Endothelial cell of umbilical vein (primary cell): ENCODE measurements at regions of chrX and their contacts with region 1.

Region 1: GRCh38 chrX:49915361-49916222 is 6.8 kb upstream of the CLCN5 start:
- DNase-seq: peak; percentile 49
- H3K4me3 ChIP-seq: no peak overlapping the region
- H3K27ac ChIP-seq: no peak overlapping the region
- H3K4me1 ChIP-seq: no peaks in the 10 kb centered on the region
- H3K27me3 ChIP-seq: no peaks in the 10 kb centered on the region
- CTCF ChIP-seq: peak; percentile 62 to 68
- POLR2A ChIP-seq: no peak

Region 2: DNA sequence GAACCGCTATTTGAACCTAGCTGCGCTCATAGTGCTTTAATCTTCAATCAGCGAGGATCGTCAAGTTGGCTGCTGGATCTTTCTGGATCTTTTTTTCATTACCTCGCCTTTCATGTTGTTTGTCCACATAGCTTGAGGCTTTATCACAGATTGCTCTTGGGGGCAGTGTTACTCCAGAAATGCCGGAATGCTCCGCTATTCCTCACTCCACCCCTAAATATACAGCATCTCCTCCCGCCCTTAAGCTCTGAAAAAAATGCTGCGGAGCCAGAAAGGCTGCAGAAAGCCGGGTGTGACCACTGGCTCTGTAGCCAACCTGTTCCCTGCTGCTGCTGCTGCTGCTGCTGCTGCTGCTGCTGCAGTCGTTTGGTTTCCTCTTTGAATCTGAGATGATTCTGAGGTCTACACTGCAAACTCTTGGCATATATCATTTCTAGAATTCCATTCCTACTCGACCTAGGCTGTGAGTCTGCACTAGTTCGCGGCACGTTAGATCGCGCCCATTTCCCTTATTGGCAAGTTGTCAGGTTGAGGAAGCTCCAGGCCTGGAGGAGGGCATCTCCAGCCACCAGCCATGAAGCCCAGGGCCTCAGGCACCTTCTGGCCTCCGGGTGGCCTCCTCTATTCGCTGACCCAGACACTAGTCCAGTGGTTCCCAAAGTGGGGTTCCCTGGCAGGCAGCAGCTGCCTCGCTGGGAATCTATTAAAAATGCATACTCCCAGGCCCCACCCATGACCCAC is 1284.1 kb before region 1 on chrX:
- CTCF ChIA-PET with region 1: no interaction called
- POLR2A ChIA-PET with region 1: no interaction called
- dilution Hi-C with region 1: no loop called
- intact Hi-C with region 1: loop called (anchors 2 kb)
- DNase-seq: peak; percentile 88
- H3K4me3 ChIP-seq: no peak overlapping the region
- H3K27ac ChIP-seq: no peak overlapping the region
- H3K4me1 ChIP-seq: no peaks in the 10 kb centered on the region
- H3K27me3 ChIP-seq: no peaks in the 10 kb centered on the region
- CTCF ChIP-seq: peak; percentile 42 to 51
- POLR2A ChIP-seq: no peak

Region 3: GRCh38 chrX:49829016-49829415 is 86.6 kb before region 1 on chrX and contains the start of gene PAGE4:
- CTCF ChIA-PET with region 1: no interaction called
- POLR2A ChIA-PET with region 1: no interaction called
- dilution Hi-C with region 1: no loop called
- intact Hi-C with region 1: no loop called
- DNase-seq: no peak
- H3K4me3 ChIP-seq: no peak within 1 kb of the TSS
- H3K27ac ChIP-seq: no peak within 1 kb of the TSS
- H3K4me1 ChIP-seq: no peaks in the 10 kb centered on the region
- H3K27me3 ChIP-seq: no peaks in the 10 kb centered on the region
- CTCF ChIP-seq: no peak
- POLR2A ChIP-seq: no peak
- total RNA-seq, gene PAGE4: not detected in 2 replicates

Region 4: DNA sequence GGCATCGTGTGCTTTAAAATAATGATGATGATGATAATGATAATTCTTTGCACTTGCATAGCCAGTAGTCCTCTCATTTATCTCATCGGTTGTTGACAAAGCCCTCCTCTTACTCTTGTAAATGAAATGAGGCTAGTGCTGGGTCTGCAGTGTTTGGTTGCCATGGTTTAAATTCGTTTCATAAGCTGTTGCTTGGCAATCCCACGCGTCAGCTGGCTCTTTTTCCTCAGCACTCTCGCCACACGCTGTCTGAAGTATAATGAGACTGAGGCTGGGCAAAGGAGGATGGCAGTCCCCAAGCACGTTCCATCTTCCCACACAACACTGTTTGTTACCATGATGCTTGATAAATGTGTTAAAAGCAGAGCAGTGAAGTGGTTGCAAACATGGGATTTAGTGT is 71.0 kb before region 1 on chrX:
- CTCF ChIA-PET with region 1: no interaction called
- POLR2A ChIA-PET with region 1: no interaction called
- dilution Hi-C with region 1: no loop called
- intact Hi-C with region 1: no loop called
- DNase-seq: no peak
- H3K4me3 ChIP-seq: no peak overlapping the region
- H3K27ac ChIP-seq: no peak overlapping the region
- H3K4me1 ChIP-seq: no peaks in the 10 kb centered on the region
- H3K27me3 ChIP-seq: no peaks in the 10 kb centered on the region
- CTCF ChIP-seq: no peak
- POLR2A ChIP-seq: no peak

Region 5: DNA sequence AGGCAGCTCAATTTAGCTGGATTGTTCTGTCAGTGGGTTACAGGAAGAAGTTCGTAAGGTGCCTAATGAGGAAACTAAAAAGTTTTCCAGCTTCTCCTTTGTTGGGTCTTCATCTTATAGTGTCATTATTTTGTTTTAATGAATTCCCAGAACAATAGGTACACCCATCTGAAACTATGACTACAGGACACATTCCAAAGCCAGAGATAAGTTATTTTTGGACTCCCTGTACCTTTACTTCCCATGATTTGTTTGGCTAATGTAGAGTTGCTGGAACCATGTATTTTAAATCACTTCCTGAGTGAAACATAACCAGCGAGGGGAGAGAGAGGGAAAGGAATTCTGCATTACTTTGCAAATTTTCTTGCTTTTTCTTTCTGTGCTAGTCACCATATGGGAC is 120.8 kb after region 1 on chrX:
- CTCF ChIA-PET with region 1: no interaction called
- POLR2A ChIA-PET with region 1: no interaction called
- dilution Hi-C with region 1: no loop called
- intact Hi-C with region 1: no loop called
- DNase-seq: peak; percentile 32
- H3K4me3 ChIP-seq: peak overlapping the region in 1 of 3 experiments; percentile 40
- H3K27ac ChIP-seq: peak overlapping the region; percentile 29
- H3K4me1 ChIP-seq: peaks cover 14% of the 10 kb centered on the region
- H3K27me3 ChIP-seq: no peaks in the 10 kb centered on the region
- CTCF ChIP-seq: no peak
- POLR2A ChIP-seq: no peak

Region 6: DNA sequence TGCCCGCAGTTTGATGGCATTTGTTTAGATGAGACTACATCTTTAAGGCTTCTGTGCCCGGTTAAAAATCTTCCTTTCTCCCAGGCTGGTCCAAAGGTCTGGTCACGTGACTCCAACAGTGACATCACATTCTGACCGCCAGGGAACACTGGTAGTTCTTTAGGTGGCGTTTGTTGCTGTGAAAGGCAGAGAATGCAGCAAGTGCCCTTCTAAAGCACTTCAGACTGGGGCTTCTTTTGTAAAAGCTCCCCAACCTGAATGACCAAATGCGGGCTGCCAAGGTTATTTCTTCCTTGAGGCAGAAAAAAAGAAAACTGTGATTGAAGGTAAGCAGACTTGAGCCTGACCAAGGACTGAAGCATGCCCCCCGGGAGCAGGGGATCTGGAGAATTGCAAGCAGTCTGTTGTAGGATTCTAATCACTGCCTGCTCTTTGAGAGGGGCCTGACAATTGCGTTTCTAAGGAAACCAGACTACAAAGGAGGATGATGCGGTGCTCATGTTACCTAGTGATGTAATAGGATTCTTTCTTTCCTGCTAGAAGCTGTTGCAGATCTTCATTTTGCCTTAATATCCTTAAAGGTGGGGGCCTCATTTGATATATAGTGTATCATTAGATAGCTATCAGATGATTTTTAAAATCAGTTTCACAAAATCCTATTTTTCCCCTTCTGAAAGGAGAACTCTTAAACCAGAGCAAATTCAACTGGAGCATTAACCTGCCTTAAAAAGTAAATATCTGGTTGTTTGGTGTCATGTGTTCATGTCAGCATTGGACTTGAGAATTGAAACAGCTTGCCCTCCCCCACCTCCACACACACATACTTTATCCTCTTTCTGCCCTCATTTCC is 152.1 kb after region 1 on chrX:
- CTCF ChIA-PET with region 1: no interaction called
- POLR2A ChIA-PET with region 1: no interaction called
- dilution Hi-C with region 1: no loop called
- intact Hi-C with region 1: no loop called
- DNase-seq: peak; percentile 1
- H3K4me3 ChIP-seq: no peak overlapping the region
- H3K27ac ChIP-seq: no peak overlapping the region
- H3K4me1 ChIP-seq: no peaks in the 10 kb centered on the region
- H3K27me3 ChIP-seq: no peaks in the 10 kb centered on the region
- CTCF ChIP-seq: no peak
- POLR2A ChIP-seq: no peak

Region 7: DNA sequence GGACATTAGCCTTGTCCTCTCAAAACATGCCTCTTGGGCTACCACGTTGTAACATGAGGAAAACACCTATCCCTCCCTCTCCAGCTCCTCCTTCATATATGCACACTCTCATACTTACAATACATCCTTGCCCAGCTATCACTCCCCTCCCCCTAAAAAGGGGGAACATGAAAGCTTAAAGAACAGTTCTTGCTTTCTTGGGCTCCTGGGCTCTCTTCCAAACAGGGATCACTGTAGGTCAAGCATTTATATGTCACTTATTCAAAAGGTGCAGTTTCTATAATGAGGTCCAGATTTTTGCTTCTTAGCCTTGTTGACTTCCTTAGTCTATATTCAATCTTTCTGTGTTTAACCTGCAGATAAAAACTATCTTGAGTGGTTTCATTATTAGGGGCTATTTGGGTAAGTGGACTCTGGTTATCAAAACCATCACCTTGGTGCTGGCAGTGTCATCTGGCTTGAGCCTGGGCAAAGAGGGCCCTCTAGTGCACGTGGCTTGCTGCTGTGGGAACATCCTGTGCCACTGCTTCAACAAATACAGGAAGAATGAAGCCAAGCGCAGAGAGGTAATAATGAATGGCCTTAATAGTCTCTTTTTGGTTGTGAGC is 165.8 kb after region 1 on chrX:
- CTCF ChIA-PET with region 1: interaction called, 12 read pairs
- POLR2A ChIA-PET with region 1: no interaction called
- dilution Hi-C with region 1: no loop called
- intact Hi-C with region 1: loop called (anchors 1 kb)
- DNase-seq: peak; percentile 34
- H3K4me3 ChIP-seq: no peak overlapping the region
- H3K27ac ChIP-seq: no peak overlapping the region
- H3K4me1 ChIP-seq: no peaks in the 10 kb centered on the region
- H3K27me3 ChIP-seq: no peaks in the 10 kb centered on the region
- CTCF ChIP-seq: peak; percentile 15 to 53
- POLR2A ChIP-seq: no peak

Region 8: GRCh38 chrX:50579955-50580354 is 664.4 kb after region 1 on chrX:
- CTCF ChIA-PET with region 1: interaction called, 3 read pairs
- POLR2A ChIA-PET with region 1: no interaction called
- dilution Hi-C with region 1: no loop called
- intact Hi-C with region 1: loop called (anchors 1 kb)
- DNase-seq: peak; percentile 49
- H3K4me3 ChIP-seq: no peak overlapping the region
- H3K27ac ChIP-seq: no peak overlapping the region
- H3K4me1 ChIP-seq: no peaks in the 10 kb centered on the region
- H3K27me3 ChIP-seq: no peaks in the 10 kb centered on the region
- CTCF ChIP-seq: peak; percentile 34 to 35
- POLR2A ChIP-seq: no peak

Region 9: DNA sequence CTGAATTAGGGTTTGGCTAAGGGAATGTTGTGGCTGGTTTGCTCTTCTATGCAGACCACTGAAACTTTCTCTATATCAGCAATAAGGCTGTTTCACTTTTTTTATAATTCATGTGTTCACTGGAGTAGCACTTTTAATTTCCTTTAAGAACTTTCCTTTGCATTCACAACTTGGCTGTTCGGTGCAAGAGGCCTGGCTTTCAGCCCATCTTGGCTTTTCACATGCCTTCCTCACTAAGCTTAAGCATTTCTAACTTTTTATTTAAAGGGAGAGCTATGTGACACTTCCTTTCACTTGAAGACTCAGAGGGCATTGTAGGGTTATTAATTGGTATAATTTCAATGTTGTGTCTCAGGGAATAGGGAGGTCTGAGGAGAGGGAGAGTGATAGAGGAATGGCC is 756.1 kb after region 1 on chrX:
- CTCF ChIA-PET with region 1: no interaction called
- POLR2A ChIA-PET with region 1: no interaction called
- dilution Hi-C with region 1: no loop called
- intact Hi-C with region 1: loop called (anchors 10 kb)
- DNase-seq: no peak
- H3K4me3 ChIP-seq: no peak overlapping the region
- H3K27ac ChIP-seq: no peak overlapping the region
- H3K4me1 ChIP-seq: peaks cover 16% of the 10 kb centered on the region
- H3K27me3 ChIP-seq: no peaks in the 10 kb centered on the region
- CTCF ChIP-seq: no peak
- POLR2A ChIP-seq: no peak